AG04449 (cell line): ENCODE measurements at regions of chr6 and their contacts with region 1.

Region 1: DNA sequence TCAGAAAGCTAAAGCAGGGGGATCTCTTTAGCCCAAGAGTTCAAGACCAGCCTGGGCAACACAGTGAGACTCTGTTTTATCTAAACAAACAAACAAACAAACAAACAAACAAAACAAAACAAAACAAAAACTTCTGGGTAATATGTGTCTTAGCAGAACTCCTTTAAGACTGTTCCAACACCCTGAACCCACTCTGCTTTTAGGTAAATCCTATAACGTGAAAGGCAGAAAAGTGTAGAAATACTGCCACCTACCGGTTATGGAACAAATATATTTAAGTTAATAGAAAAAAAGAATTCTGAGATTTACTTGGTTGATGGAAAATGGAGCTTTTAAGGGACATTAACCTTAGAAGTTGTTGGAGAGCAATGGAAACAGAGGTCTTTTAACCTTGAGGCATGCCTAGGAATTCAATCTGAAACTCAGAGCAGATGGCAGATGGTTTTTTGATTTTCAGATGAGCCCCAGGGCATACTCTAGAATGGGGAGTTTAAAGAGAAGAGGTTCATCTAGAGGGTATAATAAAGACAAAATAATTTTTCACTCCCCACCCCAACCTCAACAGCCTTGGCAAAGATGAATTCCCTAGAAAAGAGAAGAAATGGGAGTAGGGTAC is 38.5 kb downstream of the SOD2 start:
- DNase-seq: no peak
- H3K4me3 ChIP-seq: no peak overlapping the region
- CTCF ChIP-seq: peak; percentile 17

Region 2: DNA sequence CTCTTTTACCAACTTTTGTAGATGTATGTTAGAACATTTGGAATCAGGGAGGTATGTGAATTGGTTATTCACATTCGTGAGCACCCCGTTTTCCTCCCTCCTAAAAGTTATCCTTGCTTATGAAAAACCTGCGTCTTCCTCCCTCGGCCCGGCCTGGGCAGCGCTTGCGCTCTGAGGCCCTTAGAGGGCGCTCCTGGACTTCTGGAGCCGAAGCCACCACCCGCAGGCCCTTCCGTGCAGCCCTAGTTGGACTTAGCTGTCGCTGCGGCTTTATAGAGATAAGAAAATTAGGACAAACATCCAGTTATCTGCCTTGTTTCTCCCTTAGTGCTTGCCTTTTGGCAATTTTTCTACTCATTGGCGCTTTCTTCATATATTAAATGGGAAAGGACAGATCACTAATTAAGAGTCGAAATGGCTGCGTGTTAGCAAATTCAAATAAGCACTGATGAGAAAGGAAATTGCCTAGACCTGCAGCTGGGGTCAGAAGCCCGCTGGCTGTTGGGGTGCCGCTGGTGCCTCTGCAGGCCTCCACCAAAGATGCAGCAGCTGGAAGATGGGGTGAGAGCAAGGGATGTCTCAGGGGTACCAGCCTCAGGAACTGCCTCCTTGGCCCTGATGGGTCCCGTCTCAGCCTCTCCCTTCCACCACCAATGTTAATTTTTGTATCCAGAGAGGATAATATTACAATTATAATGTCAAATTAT is 480.2 kb before region 1 on chr6:
- CTCF ChIA-PET with region 1: interaction called, 159 read pairs
- POLR2A ChIA-PET with region 1: no interaction called
- DNase-seq: no peak
- H3K4me3 ChIP-seq: no peak overlapping the region
- CTCF ChIP-seq: peak; percentile 97

Region 3: DNA sequence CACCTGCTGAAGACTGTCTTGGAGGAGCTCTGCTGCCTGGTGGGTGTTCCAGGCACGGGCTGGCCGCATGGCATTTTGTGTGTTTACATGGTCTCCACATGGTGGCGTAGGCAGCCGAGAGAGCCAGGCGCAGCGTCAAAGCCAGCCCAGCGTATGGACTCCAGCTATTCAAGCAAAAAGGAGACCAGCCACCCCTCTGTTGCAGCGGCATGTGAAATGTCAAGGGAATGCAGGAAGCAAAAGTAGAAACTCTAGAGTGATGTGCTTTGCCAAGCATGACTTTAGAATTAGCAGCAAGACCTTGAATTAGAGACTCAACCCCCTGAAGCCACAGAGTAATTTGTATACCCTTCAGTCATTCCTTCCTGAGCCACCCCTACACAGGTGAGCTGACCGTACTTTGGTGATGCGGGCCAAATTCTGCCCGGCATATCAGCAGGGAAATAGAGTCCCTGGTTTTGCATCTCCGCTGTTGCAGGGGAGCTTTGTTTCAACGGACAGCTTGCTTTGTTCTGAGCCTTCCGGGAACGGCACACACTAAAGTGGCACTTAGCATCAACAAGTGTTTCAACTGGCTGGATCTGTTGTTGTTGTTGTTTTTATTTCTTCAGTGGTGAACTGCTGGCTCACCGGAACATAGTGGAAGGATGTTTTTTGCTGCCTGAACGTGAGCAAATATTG is 436.9 kb before region 1 on chr6:
- CTCF ChIA-PET with region 1: interaction called, 23 read pairs
- POLR2A ChIA-PET with region 1: no interaction called
- DNase-seq: no peak
- H3K4me3 ChIP-seq: no peak overlapping the region
- CTCF ChIP-seq: peak; percentile 59

Region 4: GRCh38 chr6:159473475-159474263 is 180.9 kb before region 1 on chr6:
- CTCF ChIA-PET with region 1: no interaction called
- POLR2A ChIA-PET with region 1: no interaction called
- DNase-seq: no peak
- H3K4me3 ChIP-seq: no peak overlapping the region
- CTCF ChIP-seq: no peak

Region 5: GRCh38 chr6:159633196-159633595 is 21.4 kb before region 1 on chr6:
- CTCF ChIA-PET with region 1: interaction called, 50 read pairs
- POLR2A ChIA-PET with region 1: no interaction called
- DNase-seq: no peak
- H3K4me3 ChIP-seq: no peak overlapping the region
- CTCF ChIP-seq: peak; percentile 46

Region 6: GRCh38 chr6:159679091-159680077 is 24.8 kb after region 1 on chr6:
- CTCF ChIA-PET with region 1: interaction called, 14 read pairs
- POLR2A ChIA-PET with region 1: no interaction called
- DNase-seq: no peak
- H3K4me3 ChIP-seq: no peak overlapping the region
- CTCF ChIP-seq: no peak

Region 7: GRCh38 chr6:160000280-160000704 is 345.7 kb after region 1 on chr6:
- CTCF ChIA-PET with region 1: no interaction called
- POLR2A ChIA-PET with region 1: no interaction called
- DNase-seq: no peak
- H3K4me3 ChIP-seq: no peak overlapping the region
- CTCF ChIP-seq: no peak